Caco-2 (cell line): ENCODE measurements at regions of chr1 and their contacts with region 1.

Region 1: GRCh38 chr1:168734946-168735345 is 5.9 kb upstream of the DPT start:
- DNase-seq: peak in 1 of 2 experiments; percentile 13
- H3K4me3 ChIP-seq: no peak overlapping the region
- H3K4me3 Mint-ChIP-seq: no peak overlapping the region
- H3K27ac Mint-ChIP-seq: peak overlapping the region; percentile 21
- H3K4me1 ChIP-seq: no peaks in the 10 kb centered on the region
- H3K4me1 Mint-ChIP-seq: peaks cover 9% of the 10 kb centered on the region
- H3K27me3 ChIP-seq: no peaks in the 10 kb centered on the region
- H3K27me3 Mint-ChIP-seq: no peaks in the 10 kb centered on the region
- CTCF ChIP-seq: peak; percentile 21 to 34

Region 2: DNA sequence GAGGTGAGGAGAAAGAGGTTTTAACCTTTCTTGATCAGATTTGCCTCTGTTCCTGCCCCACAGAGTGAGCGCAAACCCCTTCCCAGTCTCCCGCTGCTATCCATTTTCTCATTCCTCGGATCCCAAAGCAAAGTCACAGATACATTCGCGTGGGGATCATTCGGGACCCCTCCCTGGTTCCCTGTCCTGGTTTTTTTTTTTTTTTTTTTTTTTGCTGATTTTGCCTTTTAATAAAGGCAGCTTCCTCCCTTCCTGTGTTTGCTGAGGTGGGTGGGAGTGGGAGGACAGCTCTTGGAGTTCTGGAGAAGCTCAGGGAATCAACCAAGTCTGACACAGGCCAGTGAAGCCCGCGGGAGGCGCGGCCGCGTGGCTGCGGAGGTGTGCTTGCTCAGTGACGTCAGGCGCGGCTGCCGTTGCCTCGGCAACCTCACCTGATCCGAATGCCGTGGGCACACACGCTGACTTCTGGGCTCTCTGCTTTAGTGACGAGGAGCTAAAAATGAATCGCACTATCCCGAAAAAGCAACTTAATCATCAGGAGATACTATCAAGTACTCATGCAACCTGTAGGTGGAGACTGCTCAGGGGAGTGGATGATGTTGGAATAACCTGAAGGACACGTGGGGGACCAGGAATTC is 347.9 kb before region 1 on chr1:
- CTCF ChIA-PET with region 1: no interaction called
- POLR2A ChIA-PET with region 1: no interaction called
- intact Hi-C with region 1: no loop called
- DNase-seq: no peak
- H3K4me3 ChIP-seq: no peak overlapping the region
- H3K4me3 Mint-ChIP-seq: no peak overlapping the region
- H3K27ac Mint-ChIP-seq: no peak overlapping the region
- H3K4me1 ChIP-seq: no peaks in the 10 kb centered on the region
- H3K4me1 Mint-ChIP-seq: peaks cover 1% of the 10 kb centered on the region
- H3K27me3 ChIP-seq: no peaks in the 10 kb centered on the region
- H3K27me3 Mint-ChIP-seq: no peaks in the 10 kb centered on the region
- CTCF ChIP-seq: no peak

Region 3: GRCh38 chr1:168879916-168880734 is 145.2 kb after region 1 on chr1:
- CTCF ChIA-PET with region 1: no interaction called
- POLR2A ChIA-PET with region 1: no interaction called
- intact Hi-C with region 1: loop called (anchors 10 kb)
- DNase-seq: no peak
- H3K4me3 ChIP-seq: no peak overlapping the region
- H3K4me3 Mint-ChIP-seq: no peak overlapping the region
- H3K27ac Mint-ChIP-seq: no peak overlapping the region
- H3K4me1 ChIP-seq: peaks cover 24% of the 10 kb centered on the region
- H3K4me1 Mint-ChIP-seq: peaks cover 44% of the 10 kb centered on the region
- H3K27me3 ChIP-seq: no peaks in the 10 kb centered on the region
- H3K27me3 Mint-ChIP-seq: no peaks in the 10 kb centered on the region
- CTCF ChIP-seq: no peak

Region 4: DNA sequence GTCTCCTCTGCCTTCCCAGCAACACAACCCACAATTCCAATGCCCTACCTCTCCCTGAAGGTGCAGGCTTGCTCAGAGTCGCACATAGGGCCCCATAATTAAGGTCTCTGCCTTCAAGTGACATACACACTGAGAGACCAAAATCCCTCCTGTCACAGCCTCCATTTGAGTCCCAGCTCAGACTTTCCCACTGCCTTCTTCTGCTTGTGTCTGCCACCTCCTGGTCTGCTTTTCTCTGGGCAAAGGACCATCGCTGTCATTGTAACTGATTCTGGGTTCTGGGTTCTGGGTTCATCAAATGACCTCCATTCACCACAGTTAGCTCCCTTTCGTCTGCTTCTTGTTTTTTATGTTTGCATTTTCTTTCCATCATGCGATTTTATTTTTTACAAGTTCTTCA is 252.4 kb after region 1 on chr1:
- CTCF ChIA-PET with region 1: no interaction called
- POLR2A ChIA-PET with region 1: no interaction called
- intact Hi-C with region 1: loop called (anchors 1 kb)
- DNase-seq: peak in 1 of 2 experiments; percentile 10
- H3K4me3 ChIP-seq: no peak overlapping the region
- H3K4me3 Mint-ChIP-seq: no peak overlapping the region
- H3K27ac Mint-ChIP-seq: no peak overlapping the region
- H3K4me1 ChIP-seq: peaks cover 8% of the 10 kb centered on the region
- H3K4me1 Mint-ChIP-seq: peaks cover 17% of the 10 kb centered on the region
- H3K27me3 ChIP-seq: no peaks in the 10 kb centered on the region
- H3K27me3 Mint-ChIP-seq: no peaks in the 10 kb centered on the region
- CTCF ChIP-seq: no peak

Region 5: GRCh38 chr1:169133801-169134502 is 399.0 kb after region 1 on chr1:
- CTCF ChIA-PET with region 1: no interaction called
- POLR2A ChIA-PET with region 1: no interaction called
- intact Hi-C with region 1: loop called (anchors 1 kb)
- DNase-seq: no peak
- H3K4me3 ChIP-seq: no peak overlapping the region
- H3K4me3 Mint-ChIP-seq: no peak overlapping the region
- H3K27ac Mint-ChIP-seq: peak overlapping the region; percentile 32
- H3K4me1 ChIP-seq: no peaks in the 10 kb centered on the region
- H3K4me1 Mint-ChIP-seq: no peaks in the 10 kb centered on the region
- H3K27me3 ChIP-seq: no peaks in the 10 kb centered on the region
- H3K27me3 Mint-ChIP-seq: no peaks in the 10 kb centered on the region
- CTCF ChIP-seq: peak in 1 of 2 experiments; percentile 15

Region 6: DNA sequence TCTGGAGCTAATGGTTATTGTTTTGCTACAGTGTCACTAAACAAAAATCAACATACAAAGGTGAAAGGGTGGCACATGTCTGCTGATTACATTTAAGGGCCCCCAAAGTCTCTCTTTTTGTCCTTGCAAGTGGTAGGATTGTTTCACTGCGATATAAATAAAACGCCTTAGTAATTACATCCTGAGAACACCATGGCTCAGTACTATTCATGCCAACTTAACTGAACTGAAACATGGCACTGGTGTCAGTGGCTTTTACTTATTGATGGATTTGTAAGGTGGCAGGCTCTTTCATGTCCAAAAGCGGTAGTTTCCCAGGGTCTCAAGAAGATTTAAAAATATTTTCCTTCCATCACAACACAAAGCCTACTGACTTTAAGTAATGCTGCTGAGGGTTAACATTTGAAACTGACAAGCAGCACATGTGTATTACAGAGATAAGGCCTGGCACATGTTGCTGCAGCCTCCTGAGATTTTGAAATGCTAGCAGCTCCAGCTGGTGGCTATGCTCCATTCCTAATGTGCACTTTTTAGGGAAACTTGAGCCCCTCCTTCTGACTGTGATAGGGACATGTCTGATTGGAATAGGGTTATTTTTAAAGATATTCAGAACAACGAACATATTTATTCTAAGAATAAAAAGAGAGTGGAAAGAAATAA is 458.4 kb after region 1 on chr1:
- CTCF ChIA-PET with region 1: no interaction called
- POLR2A ChIA-PET with region 1: no interaction called
- intact Hi-C with region 1: loop called (anchors 5 kb)
- DNase-seq: peak in 1 of 2 experiments; percentile 15
- H3K4me3 ChIP-seq: no peak overlapping the region
- H3K4me3 Mint-ChIP-seq: no peak overlapping the region
- H3K27ac Mint-ChIP-seq: no peak overlapping the region
- H3K4me1 ChIP-seq: no peaks in the 10 kb centered on the region
- H3K4me1 Mint-ChIP-seq: peaks cover 13% of the 10 kb centered on the region
- H3K27me3 ChIP-seq: no peaks in the 10 kb centered on the region
- H3K27me3 Mint-ChIP-seq: no peaks in the 10 kb centered on the region
- CTCF ChIP-seq: no peak